ENCODE measurements at regions of chr4 and their contacts with region 1.

Region 1: DNA sequence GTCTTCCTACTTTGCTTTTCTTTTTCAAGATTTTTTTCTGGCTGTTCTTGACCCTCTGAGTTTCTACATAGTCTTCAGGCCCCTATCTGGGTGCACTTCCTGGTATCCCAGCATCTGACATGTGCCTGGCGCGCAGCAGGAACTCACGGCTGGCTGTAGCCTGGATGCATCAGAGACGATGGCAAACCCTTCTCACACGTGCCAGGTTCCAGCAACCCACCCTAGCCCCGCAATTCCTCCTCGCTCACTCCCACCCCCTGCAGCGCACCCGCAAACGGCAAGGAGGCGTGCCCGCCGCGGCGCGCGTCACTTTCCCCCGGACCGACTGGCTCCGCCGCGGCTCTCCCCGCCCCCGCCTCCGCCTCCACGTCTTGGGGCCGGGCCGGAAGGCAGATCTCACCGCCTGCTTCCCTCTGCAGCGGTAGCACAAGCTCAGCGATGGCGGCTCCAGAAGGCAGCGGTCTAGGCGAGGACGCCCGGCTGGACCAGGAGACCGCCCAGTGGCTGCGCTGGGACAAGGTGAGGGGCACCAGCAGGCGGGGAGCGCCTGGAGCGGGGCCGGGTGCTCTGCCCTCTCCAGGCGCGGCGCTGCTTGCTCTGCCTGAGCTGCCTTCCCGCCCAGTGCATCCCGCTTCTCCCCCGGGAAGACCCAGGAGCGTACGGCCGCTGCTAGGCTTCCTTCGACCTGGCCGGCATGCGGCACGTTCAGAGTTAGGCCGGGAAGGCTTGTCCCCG is at the start of gene PGM2:
- DNase-seq: peak; percentile 85 to 93
- ATAC-seq: peak; percentile 97 to 99 (median 99)
- H3K4me3 ChIP-seq: peak within 1 kb of the TSS; percentile 95
- H3K4me3 Mint-ChIP-seq: peak within 1 kb of the TSS; percentile 95
- H3K27ac ChIP-seq: peak within 1 kb of the TSS; percentile 69
- H3K27ac Mint-ChIP-seq: peak within 1 kb of the TSS; percentile 84 to 93
- H3K4me1 ChIP-seq: peaks cover 14% of the 10 kb centered on the region
- H3K4me1 Mint-ChIP-seq: peaks cover 40 to 46% of the 10 kb centered on the region in 2 donors
- H3K27me3 ChIP-seq: no peaks in the 10 kb centered on the region
- H3K27me3 Mint-ChIP-seq: no peaks in the 10 kb centered on the region
- CTCF ChIP-seq: no peak
- total RNA-seq, gene PGM2: 18.7 to 31.9 (median 27.1) TPM

Region 2: DNA sequence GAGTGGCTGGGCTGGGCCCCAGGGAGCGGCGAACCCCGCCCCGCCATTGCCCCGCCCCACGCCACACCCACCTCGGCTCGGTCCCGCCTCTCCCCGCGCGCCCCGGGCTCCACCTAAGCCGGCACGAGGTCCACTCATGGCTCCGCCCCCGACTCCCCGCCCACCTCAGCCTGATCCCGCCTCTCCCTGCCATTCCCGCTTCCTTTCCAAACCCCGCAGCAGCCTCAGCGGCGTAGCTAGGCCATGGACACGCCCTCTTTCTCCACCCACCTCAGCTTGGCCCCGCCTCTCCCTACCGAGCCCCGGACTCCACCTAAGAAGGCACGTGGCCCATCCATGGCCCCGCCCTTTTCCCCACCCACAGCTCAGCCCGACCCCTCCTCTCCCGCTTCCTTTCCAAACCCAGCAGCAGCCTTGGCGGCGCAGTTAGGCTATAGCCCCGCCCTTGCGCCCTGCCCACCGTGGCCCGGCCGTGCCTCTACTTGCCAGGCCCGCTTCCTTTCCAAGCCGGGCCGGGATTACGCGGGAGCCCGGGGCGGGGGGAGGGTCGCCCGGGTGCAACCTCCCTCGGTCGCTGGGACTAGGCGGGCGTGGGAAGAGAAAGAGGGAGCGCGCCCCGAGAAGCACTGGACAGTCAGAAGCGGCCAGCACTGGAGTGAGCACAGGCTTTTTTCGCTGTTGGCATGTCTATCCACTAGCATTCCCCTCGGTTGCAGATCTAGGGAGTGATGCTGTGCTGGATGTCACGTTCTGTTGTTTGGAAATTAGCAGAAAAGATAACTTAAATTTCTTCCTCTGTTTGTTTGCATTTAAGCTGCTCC is 139.9 kb before region 1 on chr4 and contains the start of gene RELL1:
- intact Hi-C with region 1: loop called (anchors 1 kb)
- DNase-seq: peak; percentile 85 to 99
- ATAC-seq: peak; percentile 85 to 94 (median 86)
- H3K4me3 ChIP-seq: peak within 1 kb of the TSS; percentile 64
- H3K4me3 Mint-ChIP-seq: peak within 1 kb of the TSS; percentile 95
- H3K27ac ChIP-seq: peak within 1 kb of the TSS; percentile 66
- H3K27ac Mint-ChIP-seq: peak within 1 kb of the TSS; percentile 85 to 95
- H3K4me1 ChIP-seq: peaks cover 32% of the 10 kb centered on the region
- H3K4me1 Mint-ChIP-seq: peaks cover 37 to 41% of the 10 kb centered on the region in 2 donors
- H3K27me3 ChIP-seq: no peaks in the 10 kb centered on the region
- H3K27me3 Mint-ChIP-seq: no peaks in the 10 kb centered on the region
- CTCF ChIP-seq: no peak
- total RNA-seq, gene RELL1: 15.2 to 21.3 (median 15.2) TPM

Region 3: GRCh38 chr4:37749398-37749988 is 77.0 kb before region 1 on chr4:
- intact Hi-C with region 1: no loop called
- DNase-seq: no peak
- ATAC-seq: no peak
- H3K4me3 ChIP-seq: no peak overlapping the region
- H3K4me3 Mint-ChIP-seq: no peak overlapping the region
- H3K27ac ChIP-seq: no peak overlapping the region
- H3K27ac Mint-ChIP-seq: no peak overlapping the region
- H3K4me1 ChIP-seq: no peaks in the 10 kb centered on the region
- H3K4me1 Mint-ChIP-seq: peaks cover 12% of the 10 kb centered on the region in 2 donors
- H3K27me3 ChIP-seq: no peaks in the 10 kb centered on the region
- H3K27me3 Mint-ChIP-seq: peaks cover 5 to 9% of the 10 kb centered on the region in 2 donors
- CTCF ChIP-seq: no peak

Region 4: GRCh38 chr4:37891260-37892159 is 65.0 kb after region 1 on chr4:
- intact Hi-C with region 1: loop called (anchors 2 kb)
- DNase-seq: peak; percentile 59 to 76
- ATAC-seq: peak; percentile 52 to 62 (median 60)
- H3K4me3 ChIP-seq: peak overlapping the region; percentile 65
- H3K4me3 Mint-ChIP-seq: peak overlapping the region; percentile 94
- H3K27ac ChIP-seq: peak overlapping the region; percentile 76
- H3K27ac Mint-ChIP-seq: peak overlapping the region; percentile 90 to 91
- H3K4me1 ChIP-seq: peaks cover 22% of the 10 kb centered on the region
- H3K4me1 Mint-ChIP-seq: peaks cover 23 to 34% of the 10 kb centered on the region in 2 donors
- H3K27me3 ChIP-seq: no peaks in the 10 kb centered on the region
- H3K27me3 Mint-ChIP-seq: no peaks in the 10 kb centered on the region
- CTCF ChIP-seq: no peak

Region 5: DNA sequence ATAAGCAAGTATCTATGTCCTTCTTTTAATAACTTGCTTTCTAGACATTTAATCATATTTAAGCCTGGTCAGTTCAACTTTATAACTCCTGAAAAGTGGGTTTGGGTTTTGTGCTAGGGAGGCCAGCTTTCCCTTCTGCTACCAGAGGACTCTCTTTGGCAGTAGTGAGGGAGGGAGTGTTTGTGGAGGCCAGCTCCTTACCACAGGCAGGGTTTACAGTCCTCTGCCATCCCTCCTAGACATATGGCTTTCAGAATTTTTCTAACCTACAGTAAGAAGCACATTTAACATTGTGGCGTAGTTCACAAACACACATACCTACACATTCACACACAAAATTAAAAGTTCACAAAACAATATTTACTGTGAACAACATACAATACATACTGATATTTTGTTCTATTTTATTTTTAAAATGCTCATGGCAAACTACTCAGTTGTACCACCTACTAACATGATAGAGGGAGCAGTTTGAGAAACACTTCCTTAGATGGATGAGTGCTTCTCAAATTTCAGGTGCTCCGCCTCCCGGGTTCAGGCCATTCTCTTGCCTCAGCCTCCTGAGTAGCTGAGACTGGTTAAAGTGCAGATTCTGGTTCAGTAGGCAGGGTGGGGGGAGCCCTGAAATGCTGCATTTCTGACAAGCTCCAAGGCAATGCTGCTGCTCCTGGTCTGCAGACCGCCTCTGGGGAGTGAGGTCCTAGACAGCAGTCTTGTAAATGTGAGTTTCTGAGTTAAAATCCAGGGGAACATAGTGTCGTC is 220.4 kb after region 1 on chr4:
- intact Hi-C with region 1: no loop called
- DNase-seq: no peak
- ATAC-seq: no peak
- H3K4me3 ChIP-seq: no peak overlapping the region
- H3K4me3 Mint-ChIP-seq: no peak overlapping the region
- H3K27ac ChIP-seq: no peak overlapping the region
- H3K27ac Mint-ChIP-seq: peak overlapping the region in 1 of 2 donors; percentile 4
- H3K4me1 ChIP-seq: no peaks in the 10 kb centered on the region
- H3K4me1 Mint-ChIP-seq: no peaks in the 10 kb centered on the region
- H3K27me3 ChIP-seq: no peaks in the 10 kb centered on the region
- H3K27me3 Mint-ChIP-seq: no peaks in the 10 kb centered on the region
- CTCF ChIP-seq: no peak